Caco-2 (cell line): ENCODE measurements at regions of chr11 and their contacts with region 1.

Region 1: GRCh38 chr11:98711011-98711410 is 309.7 kb upstream of the CNTN5 start:
- DNase-seq: no peak
- H3K4me3 ChIP-seq: no peak overlapping the region
- H3K4me3 Mint-ChIP-seq: no peak overlapping the region
- H3K27ac Mint-ChIP-seq: no peak overlapping the region
- H3K4me1 ChIP-seq: no peaks in the 10 kb centered on the region
- H3K4me1 Mint-ChIP-seq: no peaks in the 10 kb centered on the region
- H3K27me3 ChIP-seq: no peaks in the 10 kb centered on the region
- H3K27me3 Mint-ChIP-seq: no peaks in the 10 kb centered on the region
- CTCF ChIP-seq: no peak

Region 2: GRCh38 chr11:98740321-98740720 is 29.3 kb after region 1 on chr11:
- CTCF ChIA-PET with region 1: no interaction called
- POLR2A ChIA-PET with region 1: no interaction called
- intact Hi-C with region 1: loop called (anchors 1 kb)
- DNase-seq: no peak
- H3K4me3 ChIP-seq: no peak overlapping the region
- H3K4me3 Mint-ChIP-seq: no peak overlapping the region
- H3K27ac Mint-ChIP-seq: no peak overlapping the region
- H3K4me1 ChIP-seq: no peaks in the 10 kb centered on the region
- H3K4me1 Mint-ChIP-seq: no peaks in the 10 kb centered on the region
- H3K27me3 ChIP-seq: no peaks in the 10 kb centered on the region
- H3K27me3 Mint-ChIP-seq: no peaks in the 10 kb centered on the region
- CTCF ChIP-seq: no peak

Region 3: DNA sequence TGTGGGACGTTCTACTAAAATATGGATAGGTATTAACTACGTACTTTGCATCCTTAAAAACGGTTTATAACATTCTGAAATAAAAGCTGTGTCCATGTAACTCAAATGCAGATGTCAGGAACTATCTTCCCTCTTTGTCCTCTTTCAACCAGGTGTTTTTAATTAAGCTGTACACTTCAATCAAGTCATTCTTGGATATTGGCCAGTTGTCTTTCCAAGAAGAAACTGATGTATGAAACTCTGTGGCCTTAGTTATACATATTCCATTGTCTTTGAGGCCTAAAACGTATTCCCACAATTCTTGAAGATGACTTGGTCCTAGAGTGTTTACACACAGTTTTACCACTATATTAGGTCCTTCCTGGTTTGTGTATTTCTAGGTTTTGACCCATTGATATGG is 60.8 kb after region 1 on chr11:
- CTCF ChIA-PET with region 1: no interaction called
- POLR2A ChIA-PET with region 1: no interaction called
- intact Hi-C with region 1: no loop called
- DNase-seq: no peak
- H3K4me3 ChIP-seq: no peak overlapping the region
- H3K4me3 Mint-ChIP-seq: no peak overlapping the region
- H3K27ac Mint-ChIP-seq: no peak overlapping the region
- H3K4me1 ChIP-seq: no peaks in the 10 kb centered on the region
- H3K4me1 Mint-ChIP-seq: no peaks in the 10 kb centered on the region
- H3K27me3 ChIP-seq: no peaks in the 10 kb centered on the region
- H3K27me3 Mint-ChIP-seq: no peaks in the 10 kb centered on the region
- CTCF ChIP-seq: no peak